ENCODE measurements at regions of chr2 and their contacts with region 1.

Region 1: DNA sequence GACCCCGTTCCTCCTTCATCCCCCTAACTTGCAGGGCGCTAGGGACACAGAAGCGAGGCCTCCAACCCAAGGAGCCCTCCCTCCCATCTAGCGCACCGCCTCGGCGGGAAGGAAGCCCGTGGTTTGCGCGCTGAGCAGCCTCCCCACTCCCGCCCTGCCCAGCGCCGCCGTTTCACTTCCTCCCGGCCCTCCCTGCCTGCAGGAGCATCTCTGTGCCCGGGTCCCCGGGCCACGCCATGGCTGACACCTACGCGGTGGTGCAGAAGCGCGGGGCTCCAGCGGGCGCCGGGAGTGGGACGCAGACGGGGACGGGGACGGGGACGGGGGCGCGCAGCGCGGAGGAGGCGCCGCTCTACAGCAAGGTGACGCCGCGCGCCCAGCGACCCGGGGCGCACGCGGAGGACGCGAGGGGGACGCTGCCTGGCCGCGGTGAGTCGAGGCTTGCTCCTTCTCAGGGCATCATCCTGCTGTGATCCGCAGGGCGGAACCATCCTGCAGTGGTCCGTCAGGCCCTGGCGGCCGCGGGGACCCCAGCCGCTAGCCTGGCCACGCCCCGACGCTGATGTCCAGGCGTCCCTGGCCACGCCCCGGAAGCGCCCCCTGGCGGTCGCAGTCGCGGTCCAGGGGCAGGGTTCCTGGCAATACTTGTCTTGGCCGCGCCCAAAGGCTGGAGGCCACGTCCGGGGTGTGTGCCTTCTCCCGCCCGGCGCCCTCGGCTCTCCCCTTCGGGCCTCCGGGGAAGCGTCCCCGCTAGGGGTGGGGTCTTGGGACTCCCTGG is 16.4 kb downstream of the PTPN18 start:
- DNase-seq: no peak
- H3K4me3 ChIP-seq: peak overlapping the region; percentile 88
- H3K27me3 ChIP-seq: no peaks in the 10 kb centered on the region
- CTCF ChIP-seq: peak; percentile 83

Region 2: DNA sequence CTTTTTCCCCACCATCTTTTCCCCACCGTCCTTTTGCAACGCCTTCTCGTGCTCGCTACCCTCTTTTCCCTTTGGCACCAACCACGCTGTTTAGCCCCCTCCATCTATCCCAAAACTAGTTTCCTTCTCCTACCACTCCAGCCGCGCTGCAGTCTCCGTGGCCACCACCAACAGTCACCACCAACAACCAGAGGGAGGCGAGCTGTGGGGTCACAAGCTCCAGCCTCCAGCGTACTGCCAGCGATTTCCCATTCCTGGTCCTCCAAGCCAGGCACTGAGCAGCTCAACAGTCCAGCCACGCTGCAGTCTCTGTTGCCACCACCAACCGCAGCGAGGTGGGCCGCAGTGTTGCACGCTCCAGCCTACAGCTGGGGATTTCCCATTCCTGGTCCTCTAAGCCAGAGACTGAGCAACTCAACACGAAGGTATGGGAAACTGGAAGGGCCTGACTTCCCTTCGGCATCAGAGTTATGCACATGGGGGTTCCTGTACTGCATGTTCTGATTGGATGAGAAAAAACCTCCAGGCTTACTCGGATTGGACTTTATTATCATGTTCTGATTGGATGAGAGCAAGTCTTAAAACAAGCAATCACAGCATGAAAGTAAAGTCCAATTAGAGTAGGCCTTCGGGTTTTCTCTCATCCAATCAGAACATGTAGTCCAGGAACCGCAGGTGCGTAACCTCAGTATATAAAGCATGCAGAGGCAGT is 71.8 kb before region 1 on chr2:
- CTCF ChIA-PET with region 1: no interaction called
- POLR2A ChIA-PET with region 1: no interaction called
- DNase-seq: no peak
- H3K4me3 ChIP-seq: no peak overlapping the region
- H3K27me3 ChIP-seq: peaks cover 2% of the 10 kb centered on the region; the same call in 1 of the 2 replicates
- CTCF ChIP-seq: no peak

Region 3: GRCh38 chr2:130332271-130333073 is 39.8 kb before region 1 on chr2:
- CTCF ChIA-PET with region 1: no interaction called
- POLR2A ChIA-PET with region 1: no interaction called
- DNase-seq: no peak
- H3K4me3 ChIP-seq: no peak overlapping the region; the same call in 1 of the 2 replicates
- H3K27me3 ChIP-seq: peaks cover 2% of the 10 kb centered on the region
- CTCF ChIP-seq: peak; percentile 98

Region 4: GRCh38 chr2:130355578-130356431 is 16.4 kb before region 1 on chr2 and contains the start of gene PTPN18:
- CTCF ChIA-PET with region 1: interaction called, 11 read pairs
- POLR2A ChIA-PET with region 1: no interaction called
- DNase-seq: peak; percentile 56
- H3K4me3 ChIP-seq: peak within 1 kb of the TSS; percentile 83
- H3K27me3 ChIP-seq: no peaks in the 10 kb centered on the region
- CTCF ChIP-seq: peak; percentile 35
- polyA plus RNA-seq, gene PTPN18: 21.0 and 24.4 TPM in 2 replicates

Region 5: DNA sequence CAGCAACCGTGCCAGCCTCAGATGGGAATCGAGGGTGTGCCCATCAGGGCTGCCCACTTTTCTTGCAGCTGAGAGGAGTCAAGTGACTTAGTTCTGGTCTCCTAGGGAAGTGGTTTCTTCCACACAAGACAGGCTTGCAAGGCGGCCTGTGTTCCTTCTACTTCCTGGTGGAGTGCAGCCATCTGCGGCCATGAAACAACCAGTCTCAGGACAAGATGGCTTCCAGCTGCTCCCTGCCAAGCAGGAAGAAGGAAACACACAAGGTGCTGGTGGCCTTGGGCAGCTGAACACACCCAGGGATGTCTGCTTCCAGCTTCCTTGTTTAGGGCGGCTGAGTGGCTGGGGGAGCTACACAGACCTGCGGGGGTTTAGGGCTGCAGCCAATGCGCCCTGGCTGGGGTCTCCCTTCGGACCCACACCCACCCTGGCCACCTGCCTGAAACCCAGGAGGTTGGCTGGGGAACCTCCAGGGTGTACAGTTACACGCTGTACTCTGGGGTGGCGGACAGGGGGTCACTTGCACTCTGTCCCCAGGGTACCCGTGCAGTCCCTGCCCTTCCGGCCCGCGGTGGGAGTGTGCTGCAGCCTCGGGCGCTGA is 18.3 kb after region 1 on chr2:
- CTCF ChIA-PET with region 1: interaction called, 14 read pairs
- POLR2A ChIA-PET with region 1: no interaction called
- DNase-seq: no peak
- H3K4me3 ChIP-seq: peak overlapping the region; percentile 62
- H3K27me3 ChIP-seq: no peaks in the 10 kb centered on the region
- CTCF ChIP-seq: no peak

Region 6: DNA sequence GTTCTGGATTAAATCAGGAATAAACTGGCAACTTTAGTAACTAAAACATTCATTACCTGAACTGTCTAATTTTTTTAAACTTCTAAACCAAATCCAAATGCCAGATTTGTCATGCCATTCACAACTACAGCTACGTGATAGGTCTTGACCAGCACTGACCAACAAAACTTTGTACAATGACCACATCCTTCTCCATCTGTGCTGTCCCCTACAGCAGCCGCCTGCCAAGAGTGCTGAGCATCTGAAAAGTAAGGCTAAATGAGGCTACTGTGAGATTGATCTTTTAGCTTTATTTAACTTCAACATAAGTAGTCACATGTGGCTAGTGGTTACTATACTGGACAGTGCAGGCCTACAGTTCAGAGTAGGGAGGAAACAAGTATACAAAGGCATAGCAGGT is 713.4 kb after region 1 on chr2:
- CTCF ChIA-PET with region 1: no interaction called
- POLR2A ChIA-PET with region 1: no interaction called
- DNase-seq: no peak
- H3K4me3 ChIP-seq: no peak overlapping the region
- H3K27me3 ChIP-seq: no peaks in the 10 kb centered on the region
- CTCF ChIP-seq: no peak

Measured in BJ (cell line).